GM12878 (cell line): ENCODE measurements at regions of chr15 and their contacts with region 1.

Region 1: GRCh38 chr15:59528965-59529402 is 82.6 kb upstream of the GCNT3 start:
- DNase-seq: no peak
- ATAC-seq: peak; percentile 91
- H3K4me3 ChIP-seq: no peak overlapping the region
- H3K27ac ChIP-seq: no peak overlapping the region
- H3K4me1 ChIP-seq: no peaks in the 10 kb centered on the region; the same call in none of the 2 replicates
- H3K27me3 ChIP-seq: no peaks in the 10 kb centered on the region
- CTCF ChIP-seq: peak; percentile 73 to 89 (median 80)
- EP300 ChIP-seq: no peak
- POLR2A ChIP-seq: no peak
- RAD21 ChIP-seq: peak; percentile 96

Region 2: DNA sequence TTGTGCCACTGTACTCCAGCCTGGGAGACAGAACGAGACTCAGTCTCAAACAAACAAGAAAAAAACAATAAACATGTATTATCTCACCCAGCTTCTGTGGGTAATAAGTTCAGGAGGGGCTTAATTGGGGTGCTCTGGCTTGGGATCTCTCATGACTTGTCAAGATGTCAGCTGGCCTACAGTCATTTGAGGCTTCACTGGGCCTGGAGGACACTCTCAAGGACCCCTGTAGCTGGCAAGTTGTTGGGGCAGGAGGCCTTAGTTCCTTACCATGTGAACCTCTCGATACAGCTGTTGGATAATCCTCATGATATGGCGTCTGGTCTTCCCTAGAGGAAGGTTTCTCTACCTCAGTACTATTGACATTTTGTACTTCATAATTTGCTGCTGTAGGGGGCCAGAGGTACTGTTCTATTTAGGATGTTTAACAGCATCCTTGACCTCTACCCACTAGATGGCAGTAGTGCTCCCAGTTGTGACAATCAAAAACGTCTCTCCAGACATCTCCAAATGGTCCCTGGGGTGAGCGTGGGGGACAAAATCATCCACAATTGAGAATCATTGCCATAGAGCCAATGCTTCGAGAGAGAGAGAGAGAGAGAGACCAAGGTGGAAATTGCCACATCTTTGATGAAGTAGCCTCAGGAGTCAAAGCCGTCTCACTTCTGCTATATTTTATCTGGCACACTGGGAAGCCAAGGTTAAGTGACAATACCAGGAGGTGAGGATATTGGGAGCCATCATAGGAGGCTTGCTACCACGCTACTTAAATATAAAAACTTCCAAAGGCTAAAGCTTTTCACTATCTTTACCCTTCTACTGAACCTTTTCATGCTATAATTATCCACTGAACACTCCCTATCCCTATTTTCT is 571.6 kb before region 1 on chr15:
- CTCF ChIA-PET with region 1: interaction called, 51 read pairs
- POLR2A ChIA-PET with region 1: no interaction called
- RAD21 ChIA-PET with region 1: interaction called, 4 read pairs
- SMC1A ChIA-PET with region 1: interaction called, 7 read pairs
- in situ Hi-C with region 1: no loop called
- intact Hi-C with region 1: no loop called
- DNase-seq: no peak
- ATAC-seq: peak; percentile 98
- H3K4me3 ChIP-seq: no peak overlapping the region
- H3K27ac ChIP-seq: no peak overlapping the region
- H3K4me1 ChIP-seq: peaks cover 11% of the 10 kb centered on the region
- H3K27me3 ChIP-seq: no peaks in the 10 kb centered on the region
- CTCF ChIP-seq: peak; percentile 79 to 87 (median 81)
- EP300 ChIP-seq: no peak
- POLR2A ChIP-seq: no peak
- RAD21 ChIP-seq: peak; percentile 82

Region 3: DNA sequence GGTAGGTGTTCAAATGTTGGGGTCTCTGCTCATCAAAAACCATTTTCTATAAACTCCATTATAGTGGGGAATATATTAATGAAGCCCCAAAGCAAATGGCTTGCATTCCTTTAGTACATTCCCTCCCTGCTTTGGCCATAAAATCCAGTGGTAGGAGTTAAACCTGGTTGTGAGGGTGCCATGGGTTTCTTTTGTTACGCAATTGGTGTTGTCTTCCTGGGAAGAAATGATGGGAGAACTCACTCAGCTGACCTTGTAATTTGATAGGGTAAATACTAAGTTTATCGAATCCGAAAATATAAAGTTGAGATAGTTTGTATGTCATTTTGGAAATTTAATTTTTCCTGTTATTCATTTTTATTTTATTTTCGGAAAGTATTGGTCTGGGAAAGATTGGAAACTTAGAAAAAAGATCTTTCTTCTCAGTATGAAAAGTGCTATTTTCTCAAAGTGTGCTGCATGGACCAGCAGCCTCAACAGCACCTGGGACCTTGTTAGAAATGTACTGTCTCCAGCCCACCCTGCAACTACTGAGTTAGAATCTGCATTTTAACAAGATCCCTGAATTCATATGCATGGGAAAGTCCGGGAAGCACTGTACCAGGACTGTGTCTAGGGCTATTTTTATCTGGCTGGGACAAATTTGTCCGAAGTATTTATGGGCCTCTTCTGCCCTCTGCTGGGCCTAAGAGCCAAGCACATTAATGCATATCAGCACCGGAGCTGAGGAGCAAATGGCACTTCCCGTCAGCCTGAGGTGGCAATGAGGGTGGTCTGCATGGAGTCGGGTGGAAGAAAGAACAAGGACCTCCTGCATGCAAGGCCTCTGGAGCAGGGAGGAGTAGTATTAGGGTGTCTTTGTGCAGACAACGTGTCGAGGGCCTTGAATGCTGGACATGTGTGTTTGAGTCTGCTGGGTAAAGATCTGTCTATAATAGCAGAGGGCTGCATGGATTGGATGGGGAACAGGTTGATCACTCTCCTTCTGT is 36.3 kb before region 1 on chr15:
- CTCF ChIA-PET with region 1: interaction called, 46 read pairs
- POLR2A ChIA-PET with region 1: no interaction called
- RAD21 ChIA-PET with region 1: interaction called, 17 read pairs
- SMC1A ChIA-PET with region 1: interaction called, 9 read pairs
- in situ Hi-C with region 1: no loop called
- intact Hi-C with region 1: no loop called
- DNase-seq: peak; percentile 40
- ATAC-seq: peak; percentile 97
- H3K4me3 ChIP-seq: no peak overlapping the region
- H3K27ac ChIP-seq: no peak overlapping the region
- H3K4me1 ChIP-seq: peaks cover 6% of the 10 kb centered on the region
- H3K27me3 ChIP-seq: no peaks in the 10 kb centered on the region
- CTCF ChIP-seq: peak; percentile 75 to 92 (median 90)
- EP300 ChIP-seq: no peak
- POLR2A ChIP-seq: no peak
- RAD21 ChIP-seq: peak; percentile 94

Region 4: DNA sequence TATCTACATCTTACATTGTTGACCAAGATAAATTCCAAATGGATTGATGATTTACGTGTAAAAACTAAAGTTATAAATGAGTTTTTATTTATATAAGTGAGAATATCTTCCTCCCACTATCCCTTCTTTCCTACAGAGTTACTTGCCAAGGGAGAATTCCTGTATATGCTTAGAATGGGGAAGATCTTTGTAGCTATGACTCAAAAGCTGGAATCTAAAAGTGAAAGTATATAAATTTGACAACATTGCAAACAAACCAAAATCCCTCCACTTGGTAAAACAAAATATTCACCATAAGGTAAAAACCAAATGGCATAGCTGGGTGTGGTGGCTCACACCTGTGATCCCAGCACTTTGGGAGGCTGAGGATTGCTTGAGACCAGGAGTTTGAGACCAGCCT is 29.9 kb after region 1 on chr15:
- CTCF ChIA-PET with region 1: interaction called, 11 read pairs
- POLR2A ChIA-PET with region 1: interaction called, 3 read pairs
- RAD21 ChIA-PET with region 1: interaction called, 5 read pairs
- SMC1A ChIA-PET with region 1: interaction called, 6 read pairs
- in situ Hi-C with region 1: no loop called
- intact Hi-C with region 1: no loop called
- DNase-seq: no peak
- ATAC-seq: no peak
- H3K4me3 ChIP-seq: no peak overlapping the region
- H3K27ac ChIP-seq: no peak overlapping the region
- H3K4me1 ChIP-seq: no peaks in the 10 kb centered on the region
- H3K27me3 ChIP-seq: no peaks in the 10 kb centered on the region
- CTCF ChIP-seq: no peak
- EP300 ChIP-seq: no peak
- POLR2A ChIP-seq: no peak
- RAD21 ChIP-seq: no peak

Region 5: GRCh38 chr15:59622289-59622688 is 93.3 kb after region 1 on chr15:
- CTCF ChIA-PET with region 1: interaction called, 22 read pairs
- POLR2A ChIA-PET with region 1: no interaction called
- RAD21 ChIA-PET with region 1: interaction called, 9 read pairs
- SMC1A ChIA-PET with region 1: interaction called, 14 read pairs
- in situ Hi-C with region 1: no loop called
- intact Hi-C with region 1: loop called (anchors 1 kb)
- DNase-seq: no peak
- ATAC-seq: peak; percentile 97
- H3K4me3 ChIP-seq: no peak overlapping the region
- H3K27ac ChIP-seq: no peak overlapping the region
- H3K4me1 ChIP-seq: no peaks in the 10 kb centered on the region
- H3K27me3 ChIP-seq: no peaks in the 10 kb centered on the region
- CTCF ChIP-seq: peak; percentile 54 to 74 (median 64)
- EP300 ChIP-seq: no peak
- POLR2A ChIP-seq: no peak
- RAD21 ChIP-seq: peak; percentile 52

Region 6: GRCh38 chr15:59688841-59689625 is 160.0 kb after region 1 on chr15 and contains the start of gene BNIP2:
- CTCF ChIA-PET with region 1: interaction called, 16 read pairs
- POLR2A ChIA-PET with region 1: no interaction called
- RAD21 ChIA-PET with region 1: interaction called, 10 read pairs
- SMC1A ChIA-PET with region 1: interaction called, 6 read pairs
- in situ Hi-C with region 1: no loop called
- intact Hi-C with region 1: no loop called
- DNase-seq: peak; percentile 92
- ATAC-seq: peak; percentile 91
- H3K4me3 ChIP-seq: peak within 1 kb of the TSS; percentile 94
- H3K27ac ChIP-seq: peak within 1 kb of the TSS; percentile 98
- H3K4me1 ChIP-seq: peaks cover 9% of the 10 kb centered on the region
- H3K27me3 ChIP-seq: no peaks in the 10 kb centered on the region
- CTCF ChIP-seq: no peak
- EP300 ChIP-seq: no peak
- POLR2A ChIP-seq: peak; percentile 90
- RAD21 ChIP-seq: no peak
- polyA plus RNA-seq, gene BNIP2: 29.9 to 58.5 TPM